ENCODE measurements at regions of chr4 and their contacts with region 1.

Region 1: GRCh38 chr4:165207431-165208220 is at the start of gene KLHL2:
- DNase-seq: peak; percentile 72
- H3K4me3 Mint-ChIP-seq: peak within 1 kb of the TSS; percentile 73
- H3K27ac Mint-ChIP-seq: peak within 1 kb of the TSS; percentile 90
- H3K4me1 Mint-ChIP-seq: peaks cover 61% of the 10 kb centered on the region
- H3K27me3 Mint-ChIP-seq: no peaks in the 10 kb centered on the region
- CTCF ChIP-seq: no peak
- total RNA-seq, gene KLHL2: 37.1 and 40.0 TPM in 2 replicates

Region 2: GRCh38 chr4:163922302-163922701 is 1285.3 kb before region 1 on chr4:
- CTCF ChIA-PET with region 1: no interaction called
- POLR2A ChIA-PET with region 1: no interaction called
- intact Hi-C with region 1: no loop called
- DNase-seq: no peak
- H3K4me3 Mint-ChIP-seq: no peak overlapping the region
- H3K27ac Mint-ChIP-seq: no peak overlapping the region
- H3K4me1 Mint-ChIP-seq: no peaks in the 10 kb centered on the region
- H3K27me3 Mint-ChIP-seq: no peaks in the 10 kb centered on the region
- CTCF ChIP-seq: no peak

Region 3: GRCh38 chr4:164326056-164326455 is 881.6 kb before region 1 on chr4:
- CTCF ChIA-PET with region 1: no interaction called
- POLR2A ChIA-PET with region 1: no interaction called
- intact Hi-C with region 1: no loop called
- DNase-seq: no peak
- H3K4me3 Mint-ChIP-seq: no peak overlapping the region
- H3K27ac Mint-ChIP-seq: no peak overlapping the region
- H3K4me1 Mint-ChIP-seq: no peaks in the 10 kb centered on the region
- H3K27me3 Mint-ChIP-seq: no peaks in the 10 kb centered on the region
- CTCF ChIP-seq: no peak

Region 4: DNA sequence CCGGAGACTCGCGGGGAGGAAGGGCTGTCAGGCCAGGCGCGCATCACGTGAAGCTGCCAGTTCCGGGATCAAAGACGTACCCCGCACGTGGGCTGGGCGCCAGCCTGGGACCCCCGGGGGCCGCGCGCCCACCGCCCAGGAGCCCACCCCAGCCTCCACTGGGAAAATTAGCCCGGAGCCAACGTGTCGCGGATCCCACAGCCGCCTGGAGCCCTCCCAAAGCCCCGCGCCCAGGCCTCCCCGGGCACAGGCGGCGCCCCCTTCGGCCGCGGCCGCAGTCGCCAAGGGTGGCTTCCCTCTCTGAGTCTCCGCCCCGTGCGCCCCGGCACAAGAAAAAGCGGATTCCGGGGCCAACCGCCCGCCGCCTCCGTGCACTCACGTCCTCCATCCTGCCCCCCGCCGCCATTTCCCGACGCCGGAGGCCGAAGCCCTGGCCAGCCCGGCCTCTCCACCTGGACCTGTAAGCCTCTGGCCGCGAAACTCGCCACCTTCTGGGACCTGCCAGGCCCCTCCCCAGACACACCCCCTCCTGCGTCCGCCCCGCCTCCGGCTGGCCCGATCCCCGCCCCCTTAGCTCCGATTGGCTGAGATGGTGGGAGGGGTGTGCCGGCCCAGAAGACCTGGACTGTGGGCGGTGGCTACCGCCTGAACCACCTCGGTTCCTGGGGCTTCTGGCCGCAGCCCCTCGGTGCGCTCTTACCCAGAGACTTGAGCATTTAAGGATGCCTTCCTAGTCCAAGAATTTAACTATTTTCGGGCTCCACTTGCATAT is 95.1 kb before region 1 on chr4 and contains the start of gene TMEM192:
- CTCF ChIA-PET with region 1: no interaction called
- POLR2A ChIA-PET with region 1: interaction called, 28 read pairs
- intact Hi-C with region 1: no loop called
- DNase-seq: peak; percentile 95
- H3K4me3 Mint-ChIP-seq: peak within 1 kb of the TSS; percentile 97
- H3K27ac Mint-ChIP-seq: peak within 1 kb of the TSS; percentile 94
- H3K4me1 Mint-ChIP-seq: peaks cover 9% of the 10 kb centered on the region
- H3K27me3 Mint-ChIP-seq: no peaks in the 10 kb centered on the region
- CTCF ChIP-seq: no peak
- total RNA-seq, gene TMEM192: 26.6 and 31.6 TPM in 2 replicates

Region 5: GRCh38 chr4:165152527-165152926 is 55.1 kb before region 1 on chr4:
- CTCF ChIA-PET with region 1: no interaction called
- POLR2A ChIA-PET with region 1: no interaction called
- intact Hi-C with region 1: no loop called
- DNase-seq: no peak
- H3K4me3 Mint-ChIP-seq: no peak overlapping the region
- H3K27ac Mint-ChIP-seq: no peak overlapping the region
- H3K4me1 Mint-ChIP-seq: peaks cover 6% of the 10 kb centered on the region
- H3K27me3 Mint-ChIP-seq: no peaks in the 10 kb centered on the region
- CTCF ChIP-seq: no peak

Region 6: DNA sequence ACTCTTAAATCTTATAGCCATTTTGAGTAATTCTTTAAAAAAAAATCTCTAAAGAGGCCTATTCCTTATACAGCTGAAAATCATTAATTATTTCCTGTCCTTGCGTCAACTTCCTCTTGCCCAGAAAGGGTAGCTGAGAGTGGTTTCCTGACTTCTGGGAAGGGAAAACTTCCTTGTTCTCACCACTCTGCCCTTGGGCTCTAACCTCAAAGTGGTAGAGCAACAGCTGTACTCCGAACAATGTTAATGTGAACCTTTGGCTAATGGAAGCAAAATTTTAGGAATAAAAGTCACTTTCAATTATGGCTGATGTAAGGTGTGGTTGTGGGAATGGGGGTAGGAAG is 15.0 kb after region 1 on chr4:
- CTCF ChIA-PET with region 1: interaction called, 5 read pairs
- POLR2A ChIA-PET with region 1: interaction called, 41 read pairs
- intact Hi-C with region 1: no loop called
- DNase-seq: peak; percentile 82
- H3K4me3 Mint-ChIP-seq: peak overlapping the region; percentile 64
- H3K27ac Mint-ChIP-seq: peak overlapping the region; percentile 95
- H3K4me1 Mint-ChIP-seq: peaks cover 32% of the 10 kb centered on the region
- H3K27me3 Mint-ChIP-seq: no peaks in the 10 kb centered on the region
- CTCF ChIP-seq: no peak

Region 7: DNA sequence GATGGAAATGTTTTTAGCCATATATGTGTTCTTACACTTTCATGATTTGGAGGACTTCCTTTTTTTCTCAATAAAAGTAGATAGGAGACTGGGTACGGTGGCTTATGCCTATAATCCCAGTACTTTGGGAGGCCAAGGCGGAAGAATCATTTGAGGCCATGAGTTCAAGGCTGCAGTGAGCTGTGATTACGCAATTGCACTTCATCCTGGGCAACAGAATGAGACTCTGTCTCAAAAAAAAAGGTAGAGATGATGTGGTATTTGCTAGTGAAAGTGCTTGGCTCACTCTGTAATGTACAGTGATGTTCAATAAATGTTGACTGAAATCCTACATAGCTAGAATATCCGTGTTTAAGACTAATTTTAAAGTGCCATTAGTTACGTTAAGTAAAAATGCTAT is 27.1 kb after region 1 on chr4:
- CTCF ChIA-PET with region 1: no interaction called
- POLR2A ChIA-PET with region 1: interaction called, 20 read pairs
- intact Hi-C with region 1: no loop called
- DNase-seq: no peak
- H3K4me3 Mint-ChIP-seq: no peak overlapping the region
- H3K27ac Mint-ChIP-seq: no peak overlapping the region
- H3K4me1 Mint-ChIP-seq: peaks cover 20% of the 10 kb centered on the region
- H3K27me3 Mint-ChIP-seq: no peaks in the 10 kb centered on the region
- CTCF ChIP-seq: no peak

Region 8: GRCh38 chr4:165248102-165248501 is 40.5 kb after region 1 on chr4:
- CTCF ChIA-PET with region 1: no interaction called
- POLR2A ChIA-PET with region 1: interaction called, 10 read pairs
- intact Hi-C with region 1: no loop called
- DNase-seq: no peak
- H3K4me3 Mint-ChIP-seq: no peak overlapping the region
- H3K27ac Mint-ChIP-seq: no peak overlapping the region
- H3K4me1 Mint-ChIP-seq: peaks cover 8% of the 10 kb centered on the region
- H3K27me3 Mint-ChIP-seq: no peaks in the 10 kb centered on the region
- CTCF ChIP-seq: no peak